ENCODE measurements at regions of chr17 and their contacts with region 1.

Region 1: GRCh38 chr17:52418901-52419641 is 260.6 kb upstream of the CA10 start:
- DNase-seq: no peak
- ATAC-seq: no peak
- H3K4me3 Mint-ChIP-seq: no peak overlapping the region
- H3K27ac Mint-ChIP-seq: no peak overlapping the region
- H3K4me1 Mint-ChIP-seq: no peaks in the 10 kb centered on the region
- H3K27me3 Mint-ChIP-seq: no peaks in the 10 kb centered on the region

Region 2: DNA sequence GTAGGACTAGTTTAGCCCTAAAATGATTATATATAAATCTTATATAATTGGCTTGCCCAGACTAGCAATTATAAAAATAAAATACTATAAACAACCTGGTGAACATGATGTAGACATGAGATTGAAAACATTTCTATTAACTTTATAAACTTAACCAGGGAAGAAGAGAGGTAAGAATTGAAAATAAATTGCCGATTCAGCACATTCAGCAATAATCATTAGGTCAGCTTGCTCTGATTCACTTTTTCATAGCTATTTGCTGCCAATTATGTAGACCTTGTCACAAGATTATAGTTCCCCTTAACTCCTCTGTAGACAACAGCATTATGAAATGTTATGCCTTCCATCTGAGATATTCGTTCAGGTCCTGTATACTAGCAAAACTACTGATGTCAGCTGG is 61.2 kb before region 1 on chr17:
- CTCF ChIA-PET with region 1: no interaction called
- POLR2A ChIA-PET with region 1: no interaction called
- intact Hi-C with region 1: loop called in 1 of 2 experiments (anchors 10 kb)
- DNase-seq: no peak
- ATAC-seq: no peak
- H3K4me3 Mint-ChIP-seq: no peak overlapping the region
- H3K27ac Mint-ChIP-seq: no peak overlapping the region
- H3K4me1 Mint-ChIP-seq: no peaks in the 10 kb centered on the region
- H3K27me3 Mint-ChIP-seq: no peaks in the 10 kb centered on the region

Measured in activated CD4-positive, alpha-beta T cell treated with anti-CD3 and anti-CD28 coated beads for 36 hours (primary cell).